PC-9 (cell line): ENCODE measurements at regions of chr7 and their contacts with region 1.

Region 1: DNA sequence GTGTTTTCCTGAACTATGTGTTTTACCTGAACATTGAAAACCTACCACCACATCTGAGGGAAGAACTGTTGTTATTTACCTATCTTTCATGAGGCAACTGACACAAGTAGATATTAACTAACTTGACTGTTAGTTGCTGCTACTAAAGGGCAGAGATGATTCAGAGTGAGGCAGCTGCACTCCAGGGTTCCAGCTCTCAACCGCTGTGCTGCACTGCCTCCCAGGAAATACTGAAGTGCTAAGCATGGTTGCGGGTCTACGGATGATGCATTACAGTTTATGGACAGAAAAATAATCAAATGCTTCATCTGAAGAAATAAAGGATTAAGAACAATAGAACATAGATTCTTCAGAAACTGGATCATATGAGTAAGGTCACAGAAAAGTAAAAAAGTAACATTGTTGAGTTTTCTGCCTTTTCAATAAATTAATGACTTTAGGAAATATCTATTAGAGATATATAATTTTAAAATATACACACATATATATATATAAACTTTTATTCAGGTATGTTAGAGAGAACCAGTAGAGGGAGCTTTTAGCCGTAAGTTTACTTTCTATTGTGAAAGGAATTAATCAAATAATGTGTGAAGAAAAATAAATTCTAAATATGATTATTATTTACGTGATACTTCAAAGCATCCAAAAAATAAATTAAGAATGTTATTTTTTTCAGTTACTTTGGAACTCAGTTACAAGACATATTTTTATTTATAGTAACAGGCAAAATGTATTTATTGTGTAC is 620.0 kb downstream of the CNTNAP2 start:
- DNase-seq: no peak
- H3K4me3 ChIP-seq: no peak overlapping the region
- H3K27ac ChIP-seq: no peak overlapping the region
- H3K4me1 ChIP-seq: no peaks in the 10 kb centered on the region
- H3K27me3 ChIP-seq: no peaks in the 10 kb centered on the region
- CTCF ChIP-seq: peak; percentile 57

Region 2: GRCh38 chr7:147245292-147245691 is 508.7 kb after region 1 on chr7:
- CTCF ChIA-PET with region 1: no interaction called
- POLR2A ChIA-PET with region 1: no interaction called
- intact Hi-C with region 1: no loop called
- DNase-seq: peak in 1 of 2 experiments; percentile 20
- H3K4me3 ChIP-seq: no peak overlapping the region
- H3K27ac ChIP-seq: no peak overlapping the region
- H3K4me1 ChIP-seq: no peaks in the 10 kb centered on the region
- H3K27me3 ChIP-seq: no peaks in the 10 kb centered on the region
- CTCF ChIP-seq: peak; percentile 86

Region 3: DNA sequence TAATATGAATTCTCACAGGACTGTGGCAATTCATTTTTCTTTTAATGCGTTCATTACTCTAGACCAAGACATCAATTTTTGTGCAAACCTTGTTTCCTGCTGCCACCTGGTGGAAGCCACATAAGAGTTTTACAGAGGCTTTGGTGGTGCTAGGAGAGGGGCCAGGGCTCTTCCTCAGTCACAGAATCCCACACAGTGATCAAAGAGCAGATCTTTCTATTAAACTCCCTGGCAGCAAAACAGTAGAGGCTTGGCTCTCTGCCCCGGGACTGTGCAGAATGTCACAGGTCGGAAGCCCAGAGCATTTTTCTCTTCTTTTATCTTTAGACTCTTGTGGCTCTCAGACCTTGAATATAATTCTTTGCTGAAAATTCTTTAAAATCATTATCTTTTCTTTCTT is 1347.5 kb after region 1 on chr7:
- CTCF ChIA-PET with region 1: no interaction called
- POLR2A ChIA-PET with region 1: no interaction called
- intact Hi-C with region 1: loop called (anchors 2 kb)
- DNase-seq: peak; percentile 20 to 38
- H3K4me3 ChIP-seq: no peak overlapping the region
- H3K27ac ChIP-seq: no peak overlapping the region
- H3K4me1 ChIP-seq: no peaks in the 10 kb centered on the region
- H3K27me3 ChIP-seq: no peaks in the 10 kb centered on the region
- CTCF ChIP-seq: peak; percentile 78